ENCODE measurements at regions of chr3 and their contacts with region 1.

Region 1: DNA sequence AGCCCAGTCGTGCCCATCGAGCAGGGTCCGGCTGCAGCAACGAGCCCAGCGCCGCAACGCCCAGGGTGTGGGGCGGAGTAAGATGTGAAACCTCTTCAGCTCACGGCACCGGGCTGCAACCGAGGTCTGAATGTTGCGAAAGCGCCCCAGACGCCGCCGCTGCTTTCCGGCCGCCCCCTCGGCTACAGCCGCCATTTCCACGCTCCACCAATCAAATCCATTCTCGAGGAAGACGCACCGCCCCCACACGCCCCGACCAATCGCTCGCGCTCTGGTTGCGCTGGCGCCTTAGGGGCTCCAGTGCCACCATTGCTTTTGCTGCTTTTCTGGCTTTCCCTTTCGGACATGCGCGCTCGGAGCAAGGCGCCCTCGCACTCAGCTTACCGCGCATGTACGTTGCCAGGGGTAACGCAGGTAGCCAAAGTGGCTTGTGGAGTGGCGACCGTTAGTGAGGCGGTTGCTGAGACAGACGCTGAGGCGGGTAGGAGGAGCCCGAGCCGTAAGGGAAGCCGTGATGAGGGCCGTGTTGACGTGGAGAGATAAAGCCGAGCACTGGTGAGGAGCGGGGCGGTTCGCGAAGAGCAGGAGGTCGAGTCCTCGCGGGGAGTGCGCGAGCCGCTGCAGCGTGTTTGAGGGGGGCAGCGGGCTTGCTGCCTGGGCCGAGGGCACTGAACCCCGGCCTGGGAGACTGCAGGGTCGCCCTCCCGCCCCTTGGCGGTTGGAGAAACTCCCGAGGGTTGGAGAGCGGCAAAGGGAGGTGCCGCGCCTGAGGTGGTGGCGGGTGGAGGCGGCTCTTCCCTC is at the starts of genes IFT122 and MBD4:
- DNase-seq: peak; percentile 96 to 97
- ATAC-seq: peak; percentile 95 to 97 (median 96)
- H3K4me3 ChIP-seq: peak within 1 kb of the TSS; percentile 64 to 91 (median 82)
- H3K27ac ChIP-seq: peak within 1 kb of the TSS; percentile 79 to 96 (median 89)
- H3K4me1 ChIP-seq: peaks cover 24 to 88% (median 63%) of the 10 kb centered on the region in 9 donors
- H3K27me3 ChIP-seq: no peaks in the 10 kb centered on the region
- CTCF ChIP-seq: no peak
- total RNA-seq, gene IFT122: 12.4 to 23.9 (median 16.8) TPM
- total RNA-seq, gene MBD4: 16.4 to 31.9 (median 19.2) TPM

Region 2: GRCh38 chr3:129399145-129399894 is 40.7 kb before region 1 on chr3:
- intact Hi-C with region 1: loop called in 1 of 10 experiments (anchors 5 kb)
- DNase-seq: peak; percentile 52 to 92
- ATAC-seq: peak; percentile 86 to 97 (median 92)
- H3K4me3 ChIP-seq: peak overlapping the region; percentile 67 to 98 (median 85)
- H3K27ac ChIP-seq: peak overlapping the region; percentile 82 to 95 (median 90)
- H3K4me1 ChIP-seq: peaks cover 0 to 44% (median 14%) of the 10 kb centered on the region in 9 donors
- H3K27me3 ChIP-seq: no peaks in the 10 kb centered on the region
- CTCF ChIP-seq: peak; percentile 67 to 93 (median 82)

Region 3: GRCh38 chr3:129461022-129461421 is 21.0 kb after region 1 on chr3:
- intact Hi-C with region 1: loop called in 1 of 10 experiments (anchors 2 kb)
- DNase-seq: no peak
- ATAC-seq: no peak
- H3K4me3 ChIP-seq: no peak overlapping the region
- H3K27ac ChIP-seq: peak overlapping the region in 9 of 10 donors; percentile 62 to 84 (median 71)
- H3K4me1 ChIP-seq: peaks cover 0 to 19% (median 13%) of the 10 kb centered on the region in 9 donors
- H3K27me3 ChIP-seq: no peaks in the 10 kb centered on the region
- CTCF ChIP-seq: no peak

Region 4: DNA sequence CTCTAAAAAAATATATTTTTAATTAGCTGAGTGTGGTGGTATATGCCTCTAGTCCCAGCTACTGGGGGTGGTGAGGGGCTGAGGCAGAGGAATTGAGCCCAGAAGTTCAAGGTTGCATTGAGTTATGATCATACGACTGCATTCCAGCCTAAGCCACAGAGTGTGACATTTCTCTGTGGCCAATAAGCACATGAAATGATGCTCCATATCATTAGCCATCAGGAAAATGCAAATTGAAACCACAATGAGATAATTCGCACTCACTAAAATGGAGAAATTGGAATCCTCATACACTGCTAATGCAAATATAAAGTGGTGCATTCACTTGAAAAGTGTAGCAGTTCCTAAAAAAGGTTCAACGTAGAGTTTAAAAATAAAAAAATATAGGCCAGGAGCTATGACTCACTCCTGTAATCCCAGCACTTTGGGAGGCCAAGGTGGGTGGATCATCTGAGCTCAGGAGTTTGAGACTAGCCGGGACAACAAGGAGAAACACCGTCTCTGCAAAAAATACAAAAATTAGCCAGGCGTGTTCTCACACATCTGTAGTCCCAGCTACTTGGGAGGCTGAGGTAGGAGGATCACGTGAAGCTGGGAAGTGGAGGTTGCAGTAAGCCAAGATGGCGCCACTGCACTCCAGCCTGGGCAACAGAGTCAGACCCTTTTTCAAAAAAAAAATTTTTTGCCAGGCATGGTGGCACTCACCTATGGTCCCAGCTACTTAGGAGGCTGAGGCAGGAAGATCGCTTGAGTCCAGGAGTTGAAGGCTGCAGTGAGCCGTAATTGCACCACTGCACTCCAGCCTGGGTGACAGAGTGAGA is 35.2 kb after region 1 on chr3:
- intact Hi-C with region 1: loop called in 2 of 10 experiments (anchors 5 kb)
- DNase-seq: no peak
- ATAC-seq: no peak
- H3K4me3 ChIP-seq: no peak overlapping the region
- H3K27ac ChIP-seq: no peak overlapping the region
- H3K4me1 ChIP-seq: no peaks in the 10 kb centered on the region
- H3K27me3 ChIP-seq: no peaks in the 10 kb centered on the region
- CTCF ChIP-seq: no peak

Measured in heart right ventricle (tissue), 16 donors.